ENCODE measurements at regions of chr3 and their contacts with region 1.

Region 1: GRCh38 chr3:129026728-129027543 is 25.8 kb downstream of the EFCC1 start:
- DNase-seq: peak; percentile 88 to 93
- ATAC-seq: peak; percentile 99 to 100
- H3K4me3 ChIP-seq: peak overlapping the region; percentile 54
- H3K27ac ChIP-seq: peak overlapping the region; percentile 77 to 89
- H3K4me1 ChIP-seq: no peaks in the 10 kb centered on the region
- CTCF ChIP-seq: peak; percentile 61
- EP300 ChIP-seq: no peak
- POLR2A ChIP-seq: peak; percentile 31
- RAD21 ChIP-seq: 0 out of 5 replicates have a peak, but pooled peaks of 1 of the 2 experiments have one; percentile 18

Region 2: GRCh38 chr3:128863560-128863959 is 163.4 kb before region 1 on chr3:
- CTCF ChIA-PET with region 1: no interaction called
- POLR2A ChIA-PET with region 1: no interaction called
- DNase-seq: no peak
- ATAC-seq: no peak
- H3K4me3 ChIP-seq: no peak overlapping the region
- H3K27ac ChIP-seq: no peak overlapping the region
- H3K4me1 ChIP-seq: no peaks in the 10 kb centered on the region
- CTCF ChIP-seq: no peak
- EP300 ChIP-seq: no peak
- POLR2A ChIP-seq: no peak
- RAD21 ChIP-seq: no peak

Region 3: DNA sequence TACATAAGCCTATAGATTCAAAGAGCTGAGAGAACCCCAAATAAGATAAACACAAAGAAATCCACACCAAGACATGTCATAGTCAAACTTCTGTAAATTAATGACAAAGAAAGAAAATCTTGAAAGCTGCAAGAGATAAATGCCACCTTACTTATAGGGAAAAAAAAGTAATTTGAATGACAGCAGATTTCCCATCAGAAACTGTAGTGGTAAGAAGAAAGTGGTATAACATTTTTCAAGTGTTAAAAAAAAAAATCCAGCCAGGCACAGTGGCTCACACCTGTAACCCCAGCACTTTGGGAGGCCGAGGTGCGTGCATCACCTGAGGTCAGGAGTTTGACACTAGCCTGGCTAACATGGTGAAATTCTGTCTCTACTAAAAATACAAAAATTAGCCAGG is 70.5 kb before region 1 on chr3:
- CTCF ChIA-PET with region 1: no interaction called
- POLR2A ChIA-PET with region 1: no interaction called
- DNase-seq: no peak
- ATAC-seq: no peak
- H3K4me3 ChIP-seq: no peak overlapping the region
- H3K27ac ChIP-seq: no peak overlapping the region
- H3K4me1 ChIP-seq: no peaks in the 10 kb centered on the region
- CTCF ChIP-seq: no peak
- EP300 ChIP-seq: no peak
- POLR2A ChIP-seq: no peak
- RAD21 ChIP-seq: no peak

Region 4: GRCh38 chr3:129016356-129016719 is 10.6 kb before region 1 on chr3:
- CTCF ChIA-PET with region 1: interaction called, 13 read pairs
- POLR2A ChIA-PET with region 1: no interaction called
- DNase-seq: no peak
- ATAC-seq: peak in 1 of 2 experiments; percentile 48; a peak in 2 of 6 replicates
- H3K4me3 ChIP-seq: no peak overlapping the region
- H3K27ac ChIP-seq: peak overlapping the region; percentile 56 to 75
- H3K4me1 ChIP-seq: peaks cover 16% of the 10 kb centered on the region
- CTCF ChIP-seq: no peak
- EP300 ChIP-seq: no peak
- POLR2A ChIP-seq: no peak
- RAD21 ChIP-seq: no peak

Region 5: GRCh38 chr3:129449279-129450115 is 422.6 kb after region 1 on chr3:
- CTCF ChIA-PET with region 1: no interaction called
- POLR2A ChIA-PET with region 1: no interaction called
- DNase-seq: no peak
- ATAC-seq: no peak
- H3K4me3 ChIP-seq: no peak overlapping the region
- H3K27ac ChIP-seq: no peak overlapping the region
- H3K4me1 ChIP-seq: no peaks in the 10 kb centered on the region
- CTCF ChIP-seq: no peak
- EP300 ChIP-seq: no peak
- POLR2A ChIP-seq: no peak
- RAD21 ChIP-seq: no peak

Measured in A549 (cell line).